CD8-positive, alpha-beta T cell (primary cell): ENCODE measurements at regions of chr20 and their contacts with region 1.

Region 1: GRCh38 chr20:52438324-52438963 is 246.9 kb upstream of the ZFP64 start:
- DNase-seq: peak in 2 of 9 experiments; percentile 46 to 60
- ATAC-seq: no peak
- H3K4me3 ChIP-seq: no peak overlapping the region
- H3K4me3 Mint-ChIP-seq: no peak overlapping the region
- H3K27ac ChIP-seq: no peak overlapping the region
- H3K27ac Mint-ChIP-seq: no peak overlapping the region
- H3K4me1 ChIP-seq: no peaks in the 10 kb centered on the region
- H3K4me1 Mint-ChIP-seq: peaks cover 9% of the 10 kb centered on the region
- H3K27me3 ChIP-seq: no peaks in the 10 kb centered on the region
- H3K27me3 Mint-ChIP-seq: no peaks in the 10 kb centered on the region
- CTCF ChIP-seq: no peak

Region 2: DNA sequence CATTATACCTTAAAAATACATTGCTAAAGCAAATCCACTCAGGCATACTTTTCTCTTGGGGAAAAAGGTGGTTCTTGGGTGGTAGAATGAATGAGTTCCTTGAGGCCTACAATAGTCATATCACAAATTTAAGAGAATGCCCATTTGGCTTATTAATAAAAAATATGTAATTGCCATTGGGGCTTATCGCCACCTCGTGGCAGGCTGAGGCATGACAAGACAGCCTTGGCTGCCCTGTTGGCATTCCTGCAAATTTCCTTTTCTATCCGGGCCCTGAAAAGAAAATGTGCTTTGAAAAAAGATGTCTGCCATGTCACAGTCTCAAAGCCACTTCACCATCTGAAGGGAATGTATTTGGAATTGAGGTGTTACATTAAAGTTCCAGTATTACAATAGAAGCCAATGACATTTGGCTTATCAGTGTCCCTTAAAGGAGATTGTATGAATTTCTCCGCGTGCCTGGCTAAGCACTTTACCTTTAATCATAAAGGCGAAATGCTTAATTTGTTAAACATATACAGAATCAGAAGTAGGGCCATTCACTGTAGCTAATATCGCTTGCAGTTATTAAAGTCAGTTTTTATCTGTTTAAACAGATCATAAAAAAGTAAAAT is 58.6 kb before region 1 on chr20:
- CTCF ChIA-PET with region 1: interaction called, 3 read pairs
- POLR2A ChIA-PET with region 1: no interaction called
- intact Hi-C with region 1: loop called in 1 of 2 experiments (anchors 10 kb)
- DNase-seq: peak in 7 of 9 experiments; percentile 5 to 62 (median 43)
- ATAC-seq: no peak
- H3K4me3 ChIP-seq: no peak overlapping the region
- H3K4me3 Mint-ChIP-seq: no peak overlapping the region
- H3K27ac ChIP-seq: no peak overlapping the region
- H3K27ac Mint-ChIP-seq: no peak overlapping the region
- H3K4me1 ChIP-seq: peaks cover 13% of the 10 kb centered on the region
- H3K4me1 Mint-ChIP-seq: peaks cover 19% of the 10 kb centered on the region
- H3K27me3 ChIP-seq: no peaks in the 10 kb centered on the region
- H3K27me3 Mint-ChIP-seq: no peaks in the 10 kb centered on the region
- CTCF ChIP-seq: peak; percentile 95